ENCODE measurements at regions of chr1 and their contacts with region 1.

Region 1: DNA sequence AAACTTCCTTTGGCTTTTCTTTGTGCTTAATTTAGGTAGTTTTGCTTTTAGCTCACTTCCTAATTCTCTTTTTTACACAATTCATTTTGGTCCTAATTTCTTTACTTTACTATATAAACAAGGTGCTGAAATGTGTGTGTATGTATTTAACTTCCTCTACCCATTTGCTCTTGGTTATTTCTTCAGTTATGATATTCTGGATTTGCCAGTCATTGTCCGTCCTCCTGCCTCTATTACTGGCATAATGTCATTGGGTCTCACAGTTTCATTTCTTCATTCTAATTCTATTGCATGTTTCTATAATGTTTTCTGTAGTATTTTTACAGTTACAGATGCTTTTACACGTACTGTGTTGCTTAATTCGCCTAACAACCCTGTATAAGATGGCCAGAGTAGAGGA is 96.2 kb downstream of the ZMYM4 start:
- DNase-seq: no peak
- ATAC-seq: no peak
- H3K4me3 ChIP-seq: no peak overlapping the region
- H3K27ac ChIP-seq: no peak overlapping the region
- H3K4me1 ChIP-seq: no peaks in the 10 kb centered on the region
- H3K27me3 ChIP-seq: no peaks in the 10 kb centered on the region
- CTCF ChIP-seq: no peak

Region 2: GRCh38 chr1:35192853-35193664 is 171.7 kb before region 1 on chr1 and contains the start of gene SFPQ:
- CTCF ChIA-PET with region 1: no interaction called
- POLR2A ChIA-PET with region 1: interaction called, 19 read pairs
- in situ Hi-C with region 1: no loop called
- intact Hi-C with region 1: no loop called
- DNase-seq: peak; percentile 98
- ATAC-seq: peak; percentile 89
- H3K4me3 ChIP-seq: peak within 1 kb of the TSS; percentile 84 to 91
- H3K27ac ChIP-seq: peak within 1 kb of the TSS; percentile 97
- H3K4me1 ChIP-seq: peaks cover 16% of the 10 kb centered on the region
- H3K27me3 ChIP-seq: no peaks in the 10 kb centered on the region
- CTCF ChIP-seq: no peak
- total RNA-seq, gene SFPQ: 266 TPM

Region 3: DNA sequence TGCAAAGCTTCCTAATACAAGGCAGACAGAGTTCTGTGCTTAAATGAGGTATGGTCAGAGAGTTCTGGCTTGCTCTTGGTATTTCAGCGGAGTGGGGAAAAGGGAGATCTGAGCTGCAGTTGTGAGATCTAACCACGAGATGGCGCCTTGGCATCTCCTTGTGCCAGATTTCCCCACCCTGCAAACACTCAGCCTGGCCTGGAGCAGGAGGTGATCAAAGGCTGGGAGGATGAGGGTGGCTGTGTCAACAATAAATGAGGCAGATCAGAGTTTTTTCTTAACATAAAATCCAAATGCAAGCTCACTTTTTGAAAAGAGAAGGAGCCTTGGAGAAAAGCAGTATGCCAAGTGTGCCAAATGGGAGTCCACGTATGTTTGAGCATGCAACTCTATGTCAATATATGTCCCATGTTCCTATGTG is 204.2 kb after region 1 on chr1:
- CTCF ChIA-PET with region 1: no interaction called
- POLR2A ChIA-PET with region 1: no interaction called
- in situ Hi-C with region 1: no loop called
- intact Hi-C with region 1: no loop called
- DNase-seq: peak; percentile 64
- ATAC-seq: peak; percentile 68
- H3K4me3 ChIP-seq: no peak overlapping the region
- H3K27ac ChIP-seq: no peak overlapping the region
- H3K4me1 ChIP-seq: peaks cover 4% of the 10 kb centered on the region
- H3K27me3 ChIP-seq: no peaks in the 10 kb centered on the region
- CTCF ChIP-seq: peak; percentile 92